Vagina (tissue), 2 donors: ENCODE measurements at regions of chr7 and their contacts with region 1.

Region 1: DNA sequence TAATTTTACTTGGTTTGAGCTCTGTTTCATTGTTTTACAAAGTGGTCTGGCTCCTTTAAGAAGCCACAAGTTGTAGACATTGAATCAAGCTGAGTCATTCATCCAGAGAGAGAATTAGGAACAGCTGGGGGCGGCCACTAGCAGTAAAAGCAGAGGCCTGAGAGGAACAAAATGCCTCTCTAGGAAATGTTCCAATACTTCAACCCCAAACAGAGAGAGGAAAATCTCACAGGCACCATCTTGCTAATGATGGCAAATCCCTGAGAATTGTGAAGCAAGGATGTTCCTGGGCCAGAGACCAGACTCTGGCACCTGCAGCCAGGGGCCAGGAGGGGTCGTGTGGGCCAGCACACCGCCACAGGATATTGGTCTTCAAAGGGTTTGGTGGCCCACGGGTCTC is 26.5 kb upstream of the TRIL start:
- DNase-seq: no peak
- H3K4me3 ChIP-seq: no peak overlapping the region
- H3K27ac ChIP-seq: peak overlapping the region; percentile 52
- H3K4me1 ChIP-seq: peaks cover 69% of the 10 kb centered on the region
- H3K27me3 ChIP-seq: no peaks in the 10 kb centered on the region
- CTCF ChIP-seq: no peak
- POLR2A ChIP-seq: no peak

Region 2: DNA sequence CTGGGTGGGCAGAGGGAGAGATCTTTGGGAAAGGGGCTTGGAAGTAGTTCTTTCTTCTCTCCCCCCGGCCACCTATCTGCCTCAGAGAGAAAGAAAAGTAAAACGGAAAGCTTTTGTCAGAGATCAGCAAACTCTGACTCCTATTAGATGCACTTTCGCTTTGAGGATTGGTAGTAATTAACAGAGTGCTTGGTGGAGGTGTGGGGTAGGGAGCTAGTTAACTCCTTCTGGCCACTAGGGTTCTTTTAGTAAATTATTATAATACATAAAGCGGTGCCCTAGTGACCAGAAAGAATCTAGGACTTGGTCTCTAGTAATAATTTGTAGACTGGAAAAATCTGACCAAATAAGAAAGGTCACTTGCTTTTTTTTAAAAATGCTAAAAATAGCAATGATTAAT is 107.1 kb after region 1 on chr7:
- intact Hi-C with region 1: loop called (anchors 10 kb)
- DNase-seq: no peak
- H3K4me3 ChIP-seq: peak overlapping the region; percentile 32 to 40
- H3K27ac ChIP-seq: peak overlapping the region; percentile 73
- H3K4me1 ChIP-seq: peaks cover 48% of the 10 kb centered on the region
- H3K27me3 ChIP-seq: no peaks in the 10 kb centered on the region
- CTCF ChIP-seq: no peak
- POLR2A ChIP-seq: no peak